ENCODE measurements at regions of chr1 and their contacts with region 1.

Region 1: DNA sequence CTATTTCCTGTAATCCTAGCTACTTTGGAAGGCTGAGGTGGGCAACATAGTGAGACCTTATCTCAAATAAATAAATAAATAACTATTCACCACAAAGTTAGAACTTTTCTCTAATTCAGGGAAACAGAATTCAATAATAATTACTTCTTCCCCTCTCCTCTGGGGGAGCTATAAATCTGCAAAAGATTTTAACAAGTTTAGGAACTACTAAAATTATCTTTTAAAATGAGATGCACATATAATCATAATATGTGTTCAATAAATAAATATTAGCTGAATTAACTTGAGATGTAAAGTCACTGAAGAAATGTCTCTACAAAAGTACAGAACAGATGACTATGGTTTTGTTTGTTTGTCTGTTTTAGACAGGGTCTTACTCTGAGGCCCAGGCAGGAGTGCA is 14.1 kb downstream of the WDR47 start:
- DNase-seq: no peak
- ATAC-seq: no peak
- H3K4me3 ChIP-seq: no peak overlapping the region
- H3K27ac ChIP-seq: no peak overlapping the region
- H3K4me1 ChIP-seq: peaks cover 5% of the 10 kb centered on the region
- H3K27me3 ChIP-seq: no peaks in the 10 kb centered on the region
- CTCF ChIP-seq: 0 out of 2 replicates have a peak, but pooled peaks have one; percentile 12
- POLR2A ChIP-seq: no peak
- RAD21 ChIP-seq: 0 out of 2 replicates have a peak, but pooled peaks have one; percentile 6

Region 2: GRCh38 chr1:109041621-109042468 is 14.0 kb after region 1 on chr1 and contains the start of gene WDR47:
- CTCF ChIA-PET with region 1: interaction called, 4 read pairs
- POLR2A ChIA-PET with region 1: interaction called, 17 read pairs
- dilution Hi-C with region 1: no loop called
- in situ Hi-C with region 1: no loop called
- intact Hi-C with region 1: no loop called
- DNase-seq: peak; percentile 93
- ATAC-seq: peak; percentile 99
- H3K4me3 ChIP-seq: peak within 1 kb of the TSS; percentile 99
- H3K27ac ChIP-seq: peak within 1 kb of the TSS; percentile 74
- H3K4me1 ChIP-seq: no peaks in the 10 kb centered on the region; the same call in 1 of the 2 replicates
- H3K27me3 ChIP-seq: no peaks in the 10 kb centered on the region
- CTCF ChIP-seq: no peak
- POLR2A ChIP-seq: peak; percentile 99
- RAD21 ChIP-seq: no peak
- total RNA-seq, gene WDR47: 17.4 and 23.3 TPM in 2 replicates